Activated CD8-positive, alpha-beta memory T cell treated with anti-CD3 and anti-CD28 coated beads, Interleukin-2, amount 10 ng/mL, durations not matched to agents 7 days and 5 days (primary cell): ENCODE measurements at regions of chr6 and their contacts with region 1.

Region 1: GRCh38 chr6:41182069-41183034 is 18.6 kb downstream of the TREML2 start:
- DNase-seq: peak; percentile 75
- ATAC-seq: peak; percentile 97
- H3K4me3 Mint-ChIP-seq: no peak overlapping the region
- H3K27ac Mint-ChIP-seq: no peak overlapping the region
- H3K4me1 Mint-ChIP-seq: peaks cover 26% of the 10 kb centered on the region
- H3K27me3 Mint-ChIP-seq: peaks cover 11% of the 10 kb centered on the region

Region 2: DNA sequence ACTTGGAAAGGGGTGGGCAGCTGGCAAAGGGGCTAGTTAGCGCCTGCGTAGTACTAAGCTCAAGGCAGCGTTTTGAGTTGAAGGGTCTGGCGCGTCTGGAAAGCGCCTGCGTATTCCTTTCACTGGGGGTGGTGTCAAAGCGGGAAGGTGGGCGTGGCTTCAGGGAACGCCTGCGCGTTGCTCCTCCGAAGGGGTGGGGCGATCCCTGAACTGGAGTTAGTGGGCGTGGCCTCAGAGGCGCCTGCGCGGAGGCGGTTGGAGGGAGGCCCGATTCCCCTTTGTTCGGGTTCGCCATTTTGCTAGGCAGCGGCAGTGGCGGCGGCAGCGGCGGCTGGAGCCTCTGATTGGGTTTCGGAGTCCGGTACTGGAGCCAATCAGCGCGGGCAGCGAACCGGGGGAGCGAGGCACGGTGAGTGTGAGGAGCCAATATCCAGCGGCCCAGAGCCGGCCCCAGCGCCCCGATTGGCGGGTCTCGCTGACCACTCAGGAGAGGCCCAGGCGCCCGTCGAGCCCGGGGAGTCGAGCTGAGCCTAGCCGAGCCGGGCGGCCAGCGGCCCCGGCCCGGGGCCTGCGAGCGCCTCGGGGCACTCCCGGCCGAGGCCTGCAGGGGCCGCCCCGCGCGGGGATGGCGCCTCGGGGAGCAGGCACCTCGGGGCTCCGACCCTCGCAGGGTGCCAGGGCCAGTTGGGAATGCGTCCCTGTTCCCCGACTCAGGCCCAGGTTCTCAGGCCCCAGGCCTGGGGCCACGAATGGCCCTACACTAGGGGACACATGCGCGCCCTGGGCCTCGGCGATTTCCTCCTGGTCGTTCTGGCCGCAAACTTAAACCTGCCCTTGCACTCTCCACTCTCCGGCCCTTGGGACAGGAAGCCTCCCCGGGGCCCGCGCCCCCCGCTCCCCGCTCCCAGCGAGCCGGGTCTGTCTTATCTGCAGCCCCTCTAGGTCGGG is 109.4 kb before region 1 on chr6 and contains the start of gene NFYA:
- CTCF ChIA-PET with region 1: interaction called, 12 read pairs
- DNase-seq: peak; percentile 100
- ATAC-seq: peak; percentile 79
- H3K4me3 Mint-ChIP-seq: peak within 1 kb of the TSS; percentile 96
- H3K27ac Mint-ChIP-seq: peak within 1 kb of the TSS; percentile 99
- H3K4me1 Mint-ChIP-seq: peaks cover 60% of the 10 kb centered on the region
- H3K27me3 Mint-ChIP-seq: no peaks in the 10 kb centered on the region
- total RNA-seq, gene NFYA: 25.0 to 31.5 TPM

Region 3: DNA sequence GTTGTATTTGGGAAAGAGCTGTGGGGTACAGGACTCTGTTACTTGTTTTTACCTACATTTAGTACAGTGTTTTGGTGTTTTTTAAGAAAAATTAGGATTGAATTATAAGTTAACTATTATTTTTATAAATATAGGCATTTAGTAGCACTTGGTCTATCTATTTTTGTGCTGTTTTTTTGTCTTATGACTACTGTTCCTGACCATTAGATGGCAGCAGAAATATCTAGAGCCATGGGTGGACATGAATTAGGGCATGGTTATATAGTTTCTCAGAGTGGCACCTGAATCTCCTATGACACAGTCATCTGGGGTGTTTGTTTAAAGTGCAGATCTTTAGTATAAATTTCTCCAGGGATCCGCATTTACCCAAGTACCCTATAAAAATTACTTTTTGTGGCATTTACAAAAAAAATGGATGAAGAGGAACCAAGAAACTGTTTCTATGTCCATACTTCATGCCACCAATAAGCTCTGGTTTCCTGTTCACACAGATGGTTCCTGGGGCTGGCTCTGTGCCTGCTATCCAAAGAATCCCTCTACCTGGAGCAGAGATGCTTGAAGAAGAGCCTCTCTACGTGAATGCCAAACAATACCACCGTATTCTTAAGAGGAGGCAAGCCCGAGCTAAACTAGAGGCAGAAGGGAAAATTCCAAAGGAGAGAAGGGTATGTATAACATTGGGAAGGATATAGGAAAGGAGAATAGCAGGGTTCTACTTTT is 89.8 kb before region 1 on chr6:
- CTCF ChIA-PET with region 1: interaction called, 20 read pairs
- DNase-seq: no peak
- ATAC-seq: no peak
- H3K4me3 Mint-ChIP-seq: no peak overlapping the region
- H3K27ac Mint-ChIP-seq: no peak overlapping the region
- H3K4me1 Mint-ChIP-seq: no peaks in the 10 kb centered on the region
- H3K27me3 Mint-ChIP-seq: no peaks in the 10 kb centered on the region

Region 4: DNA sequence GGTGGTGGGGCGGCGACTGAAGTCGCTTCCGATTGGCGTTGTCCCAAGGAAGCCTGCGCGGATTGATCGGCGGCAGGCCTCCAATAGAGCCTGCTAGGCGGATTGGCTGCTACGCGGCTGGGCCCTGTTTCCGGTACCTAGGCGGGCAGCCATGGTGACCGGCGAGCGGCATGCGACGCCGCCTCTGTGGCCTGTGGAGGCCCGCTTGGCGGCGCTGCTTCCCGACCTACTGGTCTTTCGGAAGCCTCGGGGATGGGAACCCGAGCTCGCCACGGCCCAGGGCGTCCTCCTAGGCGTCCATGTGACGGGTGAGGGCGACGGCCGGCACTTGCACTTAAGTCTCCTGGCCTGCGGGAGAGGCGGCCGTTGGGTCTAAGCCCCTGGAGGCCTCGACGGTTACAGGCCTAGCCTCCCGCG is 81.5 kb before region 1 on chr6:
- CTCF ChIA-PET with region 1: interaction called, 18 read pairs
- DNase-seq: peak; percentile 50
- ATAC-seq: peak; percentile 76
- H3K4me3 Mint-ChIP-seq: peak overlapping the region; percentile 14
- H3K27ac Mint-ChIP-seq: no peak overlapping the region
- H3K4me1 Mint-ChIP-seq: peaks cover 3% of the 10 kb centered on the region
- H3K27me3 Mint-ChIP-seq: no peaks in the 10 kb centered on the region

Region 5: GRCh38 chr6:41197234-41197633 is 14.9 kb after region 1 on chr6:
- CTCF ChIA-PET with region 1: interaction called, 17 read pairs
- DNase-seq: no peak
- ATAC-seq: no peak
- H3K4me3 Mint-ChIP-seq: no peak overlapping the region
- H3K27ac Mint-ChIP-seq: no peak overlapping the region
- H3K4me1 Mint-ChIP-seq: peaks cover 37% of the 10 kb centered on the region
- H3K27me3 Mint-ChIP-seq: no peaks in the 10 kb centered on the region

Region 6: GRCh38 chr6:41288030-41288753 is 105.8 kb after region 1 on chr6:
- CTCF ChIA-PET with region 1: no interaction called
- DNase-seq: no peak
- ATAC-seq: no peak
- H3K4me3 Mint-ChIP-seq: no peak overlapping the region
- H3K27ac Mint-ChIP-seq: no peak overlapping the region
- H3K4me1 Mint-ChIP-seq: peaks cover 3% of the 10 kb centered on the region
- H3K27me3 Mint-ChIP-seq: peaks cover 29% of the 10 kb centered on the region